ENCODE measurements at regions of chr11 and their contacts with region 1.

Region 1: GRCh38 chr11:64448599-64449556 is 89.9 kb downstream of the RPS6KA4 start:
- DNase-seq: peak; percentile 88
- ATAC-seq: peak; percentile 84
- H3K4me3 Mint-ChIP-seq: peak overlapping the region; percentile 67
- H3K27ac Mint-ChIP-seq: no peak overlapping the region
- H3K4me1 Mint-ChIP-seq: peaks cover 15% of the 10 kb centered on the region
- H3K27me3 Mint-ChIP-seq: peaks cover 16% of the 10 kb centered on the region

Region 2: GRCh38 chr11:64358907-64359711 is 89.8 kb before region 1 on chr11 and contains the start of gene RPS6KA4:
- CTCF ChIA-PET with region 1: interaction called, 8 read pairs
- POLR2A ChIA-PET with region 1: no interaction called
- intact Hi-C with region 1: loop called in 1 of 2 experiments (anchors 2 kb)
- DNase-seq: peak; percentile 80
- ATAC-seq: peak; percentile 69
- H3K4me3 Mint-ChIP-seq: peak within 1 kb of the TSS; percentile 85
- H3K27ac Mint-ChIP-seq: peak within 1 kb of the TSS; percentile 56
- H3K4me1 Mint-ChIP-seq: peaks cover 36% of the 10 kb centered on the region
- H3K27me3 Mint-ChIP-seq: no peaks in the 10 kb centered on the region
- total RNA-seq, gene RPS6KA4: 22.0 to 30.2 TPM

Region 3: GRCh38 chr11:64428693-64429092 is 20.2 kb before region 1 on chr11:
- CTCF ChIA-PET with region 1: interaction called, 13 read pairs
- POLR2A ChIA-PET with region 1: no interaction called
- intact Hi-C with region 1: no loop called
- DNase-seq: no peak
- ATAC-seq: no peak
- H3K4me3 Mint-ChIP-seq: no peak overlapping the region
- H3K27ac Mint-ChIP-seq: no peak overlapping the region
- H3K4me1 Mint-ChIP-seq: no peaks in the 10 kb centered on the region
- H3K27me3 Mint-ChIP-seq: no peaks in the 10 kb centered on the region

Region 4: DNA sequence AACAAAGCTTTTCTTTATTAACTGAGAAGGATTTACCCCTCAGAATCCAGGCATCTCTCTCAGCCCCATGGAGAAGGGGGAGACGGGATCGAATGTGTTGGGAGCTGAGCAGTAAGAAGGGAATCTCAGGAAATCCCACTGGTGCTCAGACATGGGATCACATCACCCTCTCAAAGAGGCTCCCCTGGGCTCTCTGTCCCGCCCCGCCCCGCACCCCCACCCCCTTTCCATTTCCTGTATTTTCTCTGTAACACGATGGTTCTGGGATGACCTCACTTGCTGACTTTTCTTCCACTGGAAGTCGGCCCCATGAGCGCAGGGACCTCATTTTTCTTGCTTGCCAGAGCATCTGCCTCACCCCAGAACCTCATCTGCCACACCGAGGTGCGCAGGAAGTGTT is 10.1 kb after region 1 on chr11:
- CTCF ChIA-PET with region 1: interaction called, 16 read pairs
- POLR2A ChIA-PET with region 1: no interaction called
- intact Hi-C with region 1: no loop called
- DNase-seq: no peak
- ATAC-seq: no peak
- H3K4me3 Mint-ChIP-seq: no peak overlapping the region
- H3K27ac Mint-ChIP-seq: no peak overlapping the region
- H3K4me1 Mint-ChIP-seq: no peaks in the 10 kb centered on the region
- H3K27me3 Mint-ChIP-seq: no peaks in the 10 kb centered on the region

Region 5: DNA sequence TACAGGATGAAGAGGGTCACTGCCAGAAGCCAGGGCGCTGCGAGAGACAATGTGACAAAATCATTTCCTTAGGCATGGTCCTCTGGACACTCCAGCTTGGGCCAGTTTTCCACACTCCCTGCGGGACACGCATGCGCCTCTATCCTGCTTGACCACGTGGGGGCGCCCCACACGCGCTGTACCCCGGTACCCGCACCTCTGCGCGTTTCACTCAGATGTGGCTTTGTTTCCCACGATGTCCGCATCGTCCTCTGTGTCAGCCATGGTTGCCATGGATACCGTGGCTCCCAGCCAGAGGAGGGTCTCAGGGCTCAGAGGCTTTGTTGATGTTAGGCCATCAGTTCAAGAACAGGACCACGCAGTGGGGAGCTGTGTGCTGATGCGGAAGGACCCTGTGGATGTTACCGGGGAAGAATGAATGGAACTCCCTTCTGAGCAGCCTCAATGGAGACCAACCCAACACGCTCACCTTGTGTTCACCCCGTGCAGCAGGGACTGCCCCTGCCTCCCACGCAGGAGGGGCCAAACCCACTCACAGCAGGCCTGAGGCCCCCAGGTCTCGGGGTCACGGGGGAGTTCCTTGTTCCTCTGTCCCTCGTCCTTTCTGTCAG is 41.1 kb after region 1 on chr11:
- CTCF ChIA-PET with region 1: interaction called, 12 read pairs
- POLR2A ChIA-PET with region 1: no interaction called
- intact Hi-C with region 1: no loop called
- DNase-seq: peak; percentile 75
- ATAC-seq: peak; percentile 81
- H3K4me3 Mint-ChIP-seq: no peak overlapping the region
- H3K27ac Mint-ChIP-seq: no peak overlapping the region
- H3K4me1 Mint-ChIP-seq: peaks cover 14% of the 10 kb centered on the region
- H3K27me3 Mint-ChIP-seq: peaks cover 26% of the 10 kb centered on the region

Region 6: DNA sequence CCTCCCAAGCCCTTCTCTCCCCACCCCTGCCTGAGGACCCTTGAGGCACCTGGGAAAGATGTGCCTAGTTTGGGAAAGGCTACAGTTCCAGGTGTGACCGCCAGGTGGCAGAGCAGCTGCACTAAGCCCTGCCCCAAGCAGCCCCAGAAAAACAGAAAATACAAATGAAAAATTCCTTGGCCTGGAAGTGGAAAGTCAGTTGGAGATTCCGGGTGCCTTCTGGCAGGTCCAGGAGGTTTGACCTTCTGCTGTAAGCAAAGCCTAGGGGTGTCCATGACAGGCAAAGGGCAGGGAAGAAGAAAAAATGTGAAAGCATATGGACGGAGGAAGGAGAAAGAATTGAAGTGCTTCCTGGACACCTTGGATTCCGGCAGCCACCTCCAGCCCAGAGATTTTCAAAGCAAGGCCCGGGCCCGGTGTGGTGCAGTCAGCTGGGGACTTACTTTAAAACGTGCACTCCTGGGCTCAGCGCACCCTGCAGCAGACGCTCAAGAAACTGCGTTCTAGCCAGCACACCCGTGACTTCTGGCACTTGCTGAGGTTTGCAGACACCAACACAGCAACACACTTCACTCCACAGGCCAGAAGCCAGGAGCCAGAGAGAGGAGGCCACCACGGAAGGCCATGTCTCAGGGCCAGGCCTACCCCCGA is 104.8 kb after region 1 on chr11:
- CTCF ChIA-PET with region 1: interaction called, 3 read pairs
- POLR2A ChIA-PET with region 1: no interaction called
- intact Hi-C with region 1: loop called in 1 of 2 experiments (anchors 5 kb)
- DNase-seq: peak; percentile 72
- ATAC-seq: peak; percentile 39
- H3K4me3 Mint-ChIP-seq: no peak overlapping the region
- H3K27ac Mint-ChIP-seq: no peak overlapping the region
- H3K4me1 Mint-ChIP-seq: no peaks in the 10 kb centered on the region
- H3K27me3 Mint-ChIP-seq: no peaks in the 10 kb centered on the region

Region 7: DNA sequence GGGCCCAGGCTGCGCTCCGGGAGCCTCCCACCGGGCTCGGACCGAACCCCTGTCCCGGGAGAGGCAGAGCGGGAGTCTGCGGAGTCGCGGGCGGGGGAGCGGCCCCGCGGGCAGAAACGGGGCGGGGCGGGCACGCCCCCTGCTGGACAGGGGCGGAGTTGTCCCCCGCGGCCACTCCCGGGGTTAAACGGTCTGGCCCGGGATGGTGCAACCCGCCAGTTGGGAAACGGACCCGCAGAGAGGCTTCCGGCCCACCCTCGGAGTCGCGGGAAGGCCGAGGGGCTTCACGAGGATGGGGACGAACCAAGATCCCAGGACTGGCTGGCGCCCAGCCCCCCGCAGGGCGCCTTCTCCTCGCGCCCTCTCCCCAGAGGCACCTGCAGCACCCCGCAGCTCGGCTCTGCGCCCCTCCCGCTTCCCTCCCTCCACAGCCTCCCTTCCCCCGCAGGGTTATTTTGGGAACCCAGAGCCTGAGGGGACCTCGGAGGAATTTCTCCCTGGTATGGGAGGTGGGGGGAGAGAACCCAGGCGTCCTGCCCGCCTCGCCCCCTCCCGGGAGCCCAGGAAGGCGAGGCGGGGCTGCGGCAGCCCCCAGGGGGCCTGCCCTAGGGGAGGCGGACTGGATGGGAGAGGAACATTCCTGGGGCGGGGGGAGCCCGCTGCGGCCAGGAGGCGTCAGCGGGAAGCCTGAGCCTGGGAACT is 294.2 kb after region 1 on chr11:
- CTCF ChIA-PET with region 1: interaction called, 4 read pairs
- POLR2A ChIA-PET with region 1: no interaction called
- intact Hi-C with region 1: loop called in 1 of 2 experiments (anchors 2 kb)
- DNase-seq: peak; percentile 86
- ATAC-seq: peak; percentile 47
- H3K4me3 Mint-ChIP-seq: peak overlapping the region; percentile 73
- H3K27ac Mint-ChIP-seq: no peak overlapping the region
- H3K4me1 Mint-ChIP-seq: peaks cover 25% of the 10 kb centered on the region
- H3K27me3 Mint-ChIP-seq: peaks cover 5% of the 10 kb centered on the region